HEK293 (cell line): ENCODE measurements at regions of chr2 and their contacts with region 1.

Region 1: GRCh38 chr2:48774251-48774650 is 18.7 kb upstream of the LHCGR start:
- H3K4me3 ChIP-seq: no peak overlapping the region
- H3K27ac ChIP-seq: no peak overlapping the region
- H3K4me1 ChIP-seq: no peaks in the 10 kb centered on the region
- CTCF ChIP-seq: no peak

Region 2: GRCh38 chr2:48635786-48636185 is 138.5 kb before region 1 on chr2:
- CTCF ChIA-PET with region 1: no interaction called
- POLR2A ChIA-PET with region 1: no interaction called
- H3K4me3 ChIP-seq: no peak overlapping the region
- H3K27ac ChIP-seq: no peak overlapping the region
- H3K4me1 ChIP-seq: no peaks in the 10 kb centered on the region
- CTCF ChIP-seq: no peak

Region 3: DNA sequence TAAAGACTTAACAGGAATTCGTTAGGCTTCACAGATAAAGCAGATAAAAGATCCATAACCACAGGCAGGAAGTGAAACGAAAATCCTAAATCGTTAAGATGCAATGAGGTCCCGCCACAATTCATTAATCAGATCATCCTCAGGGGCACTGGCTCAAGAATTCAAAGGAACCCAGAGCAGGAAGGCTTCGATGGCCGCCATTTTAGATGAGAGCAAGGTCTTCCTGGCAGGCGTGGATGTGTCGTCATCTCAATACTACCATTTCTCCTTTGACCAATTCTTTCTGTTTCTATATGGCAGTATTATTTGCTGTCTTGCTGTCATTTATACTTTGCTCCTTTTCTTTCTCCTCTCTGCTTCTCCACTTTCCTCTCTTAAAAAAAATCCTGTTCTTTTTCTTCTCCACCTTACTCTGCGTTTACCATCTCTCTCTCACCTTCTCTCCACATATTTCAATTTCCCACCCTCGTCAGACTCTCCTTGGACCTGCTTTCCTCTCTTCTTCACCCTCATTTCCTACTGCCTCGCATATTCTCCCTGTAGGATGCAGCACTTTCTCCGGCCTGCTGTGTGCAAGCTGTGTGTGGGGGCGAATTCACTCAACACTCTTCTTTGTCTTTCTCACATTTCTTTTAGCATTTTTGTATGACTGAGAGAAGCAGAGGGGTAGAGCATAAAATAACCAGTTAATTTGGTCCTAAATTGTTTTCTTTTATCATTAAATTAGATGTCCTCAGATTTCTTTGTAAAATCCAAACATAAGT is 16.3 kb after region 1 on chr2:
- CTCF ChIA-PET with region 1: no interaction called
- POLR2A ChIA-PET with region 1: no interaction called
- H3K4me3 ChIP-seq: no peak overlapping the region
- H3K27ac ChIP-seq: no peak overlapping the region
- H3K4me1 ChIP-seq: no peaks in the 10 kb centered on the region
- CTCF ChIP-seq: no peak

Region 4: DNA sequence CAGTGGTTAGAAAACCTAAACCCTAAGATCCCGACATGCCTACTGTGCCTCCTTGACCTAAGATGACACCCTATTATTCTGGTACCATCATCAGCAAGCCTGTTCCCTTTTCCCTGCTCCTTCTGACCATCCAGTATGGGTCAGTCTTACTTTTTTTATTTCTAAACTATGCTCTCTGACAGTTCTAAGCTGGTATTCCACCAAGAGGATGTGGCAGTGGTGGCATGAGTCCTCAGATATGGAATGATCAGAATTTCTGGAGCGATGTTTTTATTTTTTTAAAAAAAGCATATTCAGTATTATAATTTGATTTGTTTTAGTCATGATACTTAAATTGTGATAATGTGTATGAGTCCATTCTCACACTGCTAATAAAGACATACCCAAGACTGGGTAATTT is 127.2 kb after region 1 on chr2:
- CTCF ChIA-PET with region 1: interaction called, 3 read pairs
- POLR2A ChIA-PET with region 1: interaction called, 13 read pairs
- H3K4me3 ChIP-seq: no peak overlapping the region
- H3K27ac ChIP-seq: no peak overlapping the region
- H3K4me1 ChIP-seq: no peaks in the 10 kb centered on the region
- CTCF ChIP-seq: no peak

Region 5: DNA sequence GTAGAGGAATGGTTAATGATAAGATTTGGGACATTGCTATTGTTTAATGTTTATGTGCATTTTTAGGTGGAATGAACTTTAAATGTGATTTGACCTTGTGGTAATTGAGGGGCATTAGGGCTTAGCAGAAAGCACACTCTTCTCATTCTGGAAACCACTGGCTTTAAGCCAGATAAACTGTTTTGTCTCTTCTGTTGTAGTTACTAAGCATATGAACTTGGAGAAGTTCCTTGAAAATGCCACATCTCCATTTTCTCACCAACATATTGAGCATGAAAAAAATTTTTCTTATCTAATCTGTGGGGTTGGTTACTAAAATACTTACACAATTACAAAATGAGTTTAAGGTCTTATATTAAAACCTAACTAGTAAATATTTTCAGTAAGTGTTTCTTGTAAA is 450.9 kb after region 1 on chr2:
- CTCF ChIA-PET with region 1: no interaction called
- POLR2A ChIA-PET with region 1: no interaction called
- H3K4me3 ChIP-seq: no peak overlapping the region
- H3K27ac ChIP-seq: no peak overlapping the region
- H3K4me1 ChIP-seq: no peaks in the 10 kb centered on the region
- CTCF ChIP-seq: no peak